Activated B cell treated with CpG ODN at 0.5 μM for 24 hours (primary cell): ENCODE measurements at regions of chr3 and their contacts with region 1.

Region 1: DNA sequence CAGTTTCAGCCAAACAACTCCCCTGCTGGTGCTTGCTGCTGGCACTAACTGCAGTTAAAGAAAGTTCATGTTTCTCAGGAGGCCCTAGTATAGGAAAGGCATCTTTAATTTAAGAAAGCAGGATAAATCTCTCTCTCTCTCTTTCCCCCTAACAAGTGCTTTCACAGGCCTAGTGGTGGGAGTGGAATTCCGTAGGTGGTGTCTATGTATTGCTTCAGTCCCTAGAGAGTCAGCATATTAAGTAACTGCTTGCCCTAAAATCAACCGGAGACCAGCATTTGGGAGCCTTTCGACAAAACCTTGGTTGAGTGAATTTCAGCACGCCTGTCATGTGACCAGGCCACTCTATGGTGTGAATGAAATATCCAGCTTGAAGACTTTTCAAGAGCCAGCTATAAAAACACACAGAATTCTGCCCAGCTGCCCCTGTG is 169.2 kb upstream of the TGFBR2 start:
- DNase-seq: no peak
- ATAC-seq: no peak
- H3K4me3 Mint-ChIP-seq: no peak overlapping the region
- H3K27ac Mint-ChIP-seq: no peak overlapping the region
- H3K4me1 Mint-ChIP-seq: peaks cover 43% of the 10 kb centered on the region
- H3K27me3 Mint-ChIP-seq: no peaks in the 10 kb centered on the region
- CTCF ChIP-seq: no peak

Region 2: GRCh38 chr3:30453360-30454039 is 16.3 kb after region 1 on chr3:
- CTCF ChIA-PET with region 1: no interaction called
- POLR2A ChIA-PET with region 1: no interaction called
- intact Hi-C with region 1: loop called (anchors 2 kb)
- DNase-seq: no peak
- ATAC-seq: no peak
- H3K4me3 Mint-ChIP-seq: no peak overlapping the region
- H3K27ac Mint-ChIP-seq: no peak overlapping the region
- H3K4me1 Mint-ChIP-seq: no peaks in the 10 kb centered on the region
- H3K27me3 Mint-ChIP-seq: no peaks in the 10 kb centered on the region
- CTCF ChIP-seq: no peak

Region 3: DNA sequence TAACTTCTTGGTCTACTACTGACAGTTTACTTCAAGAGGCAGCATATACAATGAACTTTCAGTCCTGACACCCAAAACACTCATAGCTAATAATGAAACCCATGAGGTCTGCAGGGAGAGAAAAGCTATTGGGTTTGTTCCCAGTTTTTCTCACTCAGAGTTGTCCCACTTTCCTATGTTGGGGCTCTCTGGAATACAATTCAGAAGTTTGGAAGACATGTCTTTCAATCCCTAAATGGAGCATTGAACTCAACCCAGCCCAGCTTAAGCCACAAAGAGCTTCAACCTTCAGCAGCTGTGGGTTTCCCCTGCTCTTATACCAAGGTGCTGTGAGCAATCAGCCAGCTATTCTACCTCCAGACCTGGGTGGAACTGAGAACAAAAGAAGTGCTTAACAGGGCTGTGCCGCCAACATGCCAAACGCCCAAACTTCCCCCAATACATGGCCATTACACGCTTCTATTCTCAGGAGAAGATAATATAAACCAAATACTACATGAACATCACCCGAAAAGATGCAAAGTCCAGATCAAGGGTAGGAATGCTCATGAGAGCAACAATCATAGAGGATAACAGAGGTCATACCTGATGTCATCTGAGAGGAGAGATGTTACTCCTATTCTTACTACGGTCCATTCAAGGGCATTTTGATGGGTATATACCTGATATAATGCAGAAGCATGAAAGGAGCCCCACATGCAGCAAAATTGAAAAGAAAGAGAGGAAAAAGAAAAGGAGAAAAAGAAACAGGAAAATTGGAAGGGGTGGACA is 38.0 kb after region 1 on chr3:
- CTCF ChIA-PET with region 1: interaction called, 5 read pairs
- POLR2A ChIA-PET with region 1: interaction called, 8 read pairs
- intact Hi-C with region 1: loop called (anchors 2 kb)
- DNase-seq: no peak
- ATAC-seq: peak; percentile 94
- H3K4me3 Mint-ChIP-seq: peak overlapping the region; percentile 54
- H3K27ac Mint-ChIP-seq: peak overlapping the region; percentile 75
- H3K4me1 Mint-ChIP-seq: peaks cover 76% of the 10 kb centered on the region
- H3K27me3 Mint-ChIP-seq: no peaks in the 10 kb centered on the region
- CTCF ChIP-seq: no peak